Psoas muscle (tissue), 8 donors: ENCODE measurements at regions of chr7 and their contacts with region 1.

Region 1: DNA sequence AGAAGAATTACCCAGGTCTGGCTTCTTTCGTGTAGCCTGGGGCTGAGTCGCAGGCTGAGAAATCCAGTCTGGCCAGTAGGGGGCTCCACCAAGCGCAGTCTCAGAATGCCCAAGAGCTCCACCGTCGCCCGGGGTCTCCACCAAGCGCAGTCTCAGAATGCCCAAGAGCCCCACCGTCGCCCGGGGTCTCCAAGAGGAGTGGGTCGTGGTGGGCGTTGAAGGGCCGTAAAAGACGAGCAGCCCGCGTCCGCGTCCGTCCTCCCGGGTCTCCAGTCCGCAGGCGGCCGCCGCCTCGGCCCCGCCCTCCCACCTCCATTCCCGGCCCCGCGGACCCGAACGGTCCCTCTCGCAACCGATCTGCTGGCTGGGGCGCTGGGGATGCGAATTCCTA is 895 bp upstream of the ZYX start:
- DNase-seq: peak; percentile 88 to 91
- ATAC-seq: peak; percentile 65 to 79 (median 73)
- H3K4me3 ChIP-seq: peak overlapping the region; percentile 98
- H3K27ac ChIP-seq: peak overlapping the region; percentile 100
- H3K4me1 ChIP-seq: peaks cover 47% of the 10 kb centered on the region
- H3K27me3 ChIP-seq: no peaks in the 10 kb centered on the region
- CTCF ChIP-seq: peak; percentile 88

Region 2: DNA sequence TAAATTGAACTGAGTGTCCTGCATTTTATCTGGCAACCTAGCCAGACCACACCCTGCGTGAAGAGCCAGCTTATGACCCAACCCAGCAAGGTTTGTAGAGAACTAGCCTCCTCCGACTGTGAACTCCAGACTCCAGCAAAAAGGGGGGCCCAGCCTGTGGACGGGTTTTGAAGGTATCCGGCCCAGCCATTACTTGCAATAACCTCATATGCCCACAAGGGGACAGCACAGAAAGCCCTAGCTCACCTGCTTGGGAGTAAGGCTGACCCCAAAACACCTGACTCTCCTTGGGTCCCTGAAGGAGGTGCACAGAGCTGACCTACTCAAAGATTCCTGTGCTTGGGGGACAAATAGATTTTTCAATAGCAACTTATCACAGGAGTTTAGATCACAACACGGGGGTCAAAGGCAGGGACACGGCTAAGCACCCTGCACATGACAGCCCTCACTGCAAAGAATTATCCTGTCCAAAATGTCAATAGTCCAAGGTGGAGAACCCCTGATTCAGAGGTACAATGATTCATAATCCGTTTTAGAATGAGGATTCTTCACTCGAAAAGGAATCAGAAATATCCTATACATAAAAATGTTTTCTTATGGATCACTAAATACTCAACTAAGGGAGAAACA is 499.3 kb before region 1 on chr7:
- intact Hi-C with region 1: no loop called
- DNase-seq: no peak
- ATAC-seq: no peak
- H3K4me3 ChIP-seq: no peak overlapping the region
- H3K27ac ChIP-seq: no peak overlapping the region
- H3K4me1 ChIP-seq: no peaks in the 10 kb centered on the region
- H3K27me3 ChIP-seq: peaks cover 0 to 22% (median 11%) of the 10 kb centered on the region in 3 donors
- CTCF ChIP-seq: peak; percentile 43

Region 3: DNA sequence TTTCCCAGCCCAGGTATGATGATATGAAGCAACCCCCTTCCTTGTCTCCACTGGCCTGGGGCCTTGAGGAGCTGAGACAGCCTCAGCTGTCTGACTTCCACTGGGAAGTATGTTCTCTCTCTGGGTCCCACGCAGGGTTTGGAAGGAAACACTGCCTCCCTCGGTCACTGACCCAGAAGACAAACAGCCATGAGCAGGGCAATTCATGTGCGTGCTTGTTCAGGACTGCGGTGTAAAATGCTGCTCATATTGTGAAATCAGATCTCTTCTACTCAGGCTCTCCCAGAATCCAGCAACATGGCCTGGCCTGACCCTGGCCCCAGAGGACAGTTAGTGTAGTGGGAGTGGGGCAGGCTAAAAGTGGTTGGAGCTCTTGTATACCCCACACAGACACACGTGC is 61.6 kb before region 1 on chr7:
- intact Hi-C with region 1: loop called in 1 of 2 experiments (anchors 5 kb)
- DNase-seq: peak; percentile 42 to 81
- ATAC-seq: peak; percentile 74 to 80 (median 78)
- H3K4me3 ChIP-seq: peak overlapping the region; percentile 75
- H3K27ac ChIP-seq: peak overlapping the region; percentile 89
- H3K4me1 ChIP-seq: peaks cover 44% of the 10 kb centered on the region
- H3K27me3 ChIP-seq: no peaks in the 10 kb centered on the region
- CTCF ChIP-seq: no peak

Region 4: DNA sequence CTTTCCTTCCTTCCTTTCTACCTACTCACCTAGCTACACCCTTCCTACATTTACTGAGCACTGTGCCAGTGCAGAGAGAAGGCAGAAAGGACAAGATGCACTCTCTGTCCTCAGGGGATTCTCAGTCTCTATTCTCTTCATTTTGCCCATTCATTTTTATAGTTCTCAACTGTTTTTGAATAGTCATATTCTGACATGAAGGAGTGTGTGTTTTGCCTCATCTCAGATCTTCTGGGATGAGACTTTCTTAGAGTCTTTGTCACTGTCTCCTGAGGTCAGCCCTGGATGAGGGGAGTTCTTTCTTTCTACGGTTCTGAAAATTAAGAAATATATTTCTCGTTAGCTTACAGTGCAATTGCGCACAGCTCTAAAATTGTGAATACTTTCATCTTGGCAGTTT is 43.0 kb before region 1 on chr7:
- intact Hi-C with region 1: loop called in 1 of 2 experiments (anchors 5 kb)
- DNase-seq: no peak
- ATAC-seq: no peak
- H3K4me3 ChIP-seq: no peak overlapping the region
- H3K27ac ChIP-seq: no peak overlapping the region
- H3K4me1 ChIP-seq: peaks cover under 1% of the 10 kb centered on the region
- H3K27me3 ChIP-seq: no peaks in the 10 kb centered on the region
- CTCF ChIP-seq: no peak

Region 5: DNA sequence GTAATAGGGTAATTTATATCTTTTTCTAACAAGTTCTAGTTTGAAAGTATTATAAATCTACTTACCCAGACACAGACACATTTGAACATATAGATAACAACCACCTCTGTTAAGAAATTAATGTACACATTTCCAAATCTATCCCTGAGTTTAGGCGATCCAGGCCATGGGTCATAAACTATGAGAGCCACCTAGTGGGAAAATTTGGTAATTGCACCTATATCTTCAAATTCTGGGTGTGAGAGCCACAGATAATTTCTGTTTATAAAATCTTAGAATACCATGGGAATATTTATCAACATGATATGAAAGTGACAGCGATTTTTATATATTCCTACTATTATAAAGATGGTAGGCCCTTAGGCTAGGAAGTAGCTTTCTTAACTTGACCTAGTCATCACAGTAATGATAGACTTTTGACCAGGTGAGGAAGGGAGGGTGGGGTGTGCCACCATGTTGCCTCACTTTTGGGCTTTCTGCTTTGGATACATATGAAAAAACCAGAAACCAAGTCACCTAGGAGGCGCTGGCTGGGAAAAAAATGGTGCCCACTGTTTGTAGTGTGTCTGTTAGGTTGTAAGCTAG is 36.4 kb after region 1 on chr7:
- intact Hi-C with region 1: loop called (anchors 2 to 5 kb)
- DNase-seq: no peak
- ATAC-seq: peak in 3 of 4 donors; percentile 59 to 76 (median 60)
- H3K4me3 ChIP-seq: no peak overlapping the region
- H3K27ac ChIP-seq: no peak overlapping the region
- H3K4me1 ChIP-seq: no peaks in the 10 kb centered on the region
- H3K27me3 ChIP-seq: peaks cover 0 to 6% (median 0%) of the 10 kb centered on the region in 3 donors
- CTCF ChIP-seq: peak; percentile 88

Region 6: DNA sequence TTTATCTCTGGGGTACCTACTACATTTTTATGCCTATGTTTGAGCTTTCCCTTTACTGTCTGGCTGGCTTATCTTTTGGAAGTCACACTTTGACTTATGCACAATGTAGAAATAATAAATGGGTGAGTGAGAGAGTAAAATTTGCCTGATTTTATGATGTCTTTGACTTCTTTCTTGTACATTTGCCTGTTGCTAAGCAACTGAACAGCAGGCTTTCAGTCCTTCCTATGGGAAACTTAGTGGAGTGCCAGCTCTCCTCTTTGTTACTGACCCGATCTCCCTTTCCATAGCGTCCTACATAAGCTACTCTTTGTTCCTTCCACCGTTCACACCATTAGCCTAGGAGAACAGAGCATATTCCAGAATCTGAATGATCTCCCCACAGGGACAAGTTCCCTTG is 67.2 kb after region 1 on chr7:
- intact Hi-C with region 1: no loop called
- DNase-seq: no peak
- ATAC-seq: no peak
- H3K4me3 ChIP-seq: no peak overlapping the region
- H3K27ac ChIP-seq: no peak overlapping the region
- H3K4me1 ChIP-seq: no peaks in the 10 kb centered on the region
- H3K27me3 ChIP-seq: peaks cover 0 to 11% (median 0%) of the 10 kb centered on the region in 3 donors
- CTCF ChIP-seq: no peak